Sigmoid colon (tissue), 7 donors: ENCODE measurements at regions of chr6 and their contacts with region 1.

Region 1: DNA sequence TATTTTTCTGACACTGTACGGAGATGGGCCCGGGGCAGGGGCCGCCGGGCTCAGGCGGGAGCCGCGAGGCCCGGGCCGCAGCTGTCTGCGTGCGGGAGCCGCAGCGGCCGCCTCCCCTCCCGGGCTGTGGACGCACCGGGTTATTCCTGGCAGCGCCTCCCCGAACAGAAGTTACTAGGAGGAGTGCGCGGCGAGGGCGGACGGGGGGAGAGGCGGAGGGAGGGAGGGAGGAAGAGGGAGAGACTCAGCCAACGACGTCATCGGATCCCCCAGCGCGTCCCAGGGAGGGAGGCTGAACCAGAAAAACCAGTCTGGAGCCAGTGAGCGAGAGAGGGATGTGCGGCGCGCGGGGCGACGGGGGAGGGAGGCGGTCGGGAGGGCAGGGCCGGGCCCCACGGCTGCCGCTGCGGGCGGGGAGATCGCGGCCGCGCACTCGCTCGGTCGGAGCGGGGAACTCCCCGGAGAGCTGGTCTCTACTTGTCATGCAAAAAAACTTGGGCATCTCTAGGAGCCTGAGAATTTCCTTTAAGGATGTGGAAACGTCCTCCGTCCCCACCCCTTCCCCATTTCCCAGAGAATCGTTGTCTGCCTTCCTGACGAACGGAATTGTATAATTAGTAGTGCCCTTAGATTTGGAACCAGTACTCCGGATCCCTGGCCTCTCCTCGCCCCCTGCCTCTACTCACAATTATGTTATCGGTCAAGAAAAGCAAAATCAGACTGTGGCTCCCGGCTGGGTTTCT is 1.4 kb upstream of the HIVEP2 start:
- DNase-seq: peak; percentile 100
- H3K4me3 ChIP-seq: peak overlapping the region; percentile 55 to 92 (median 78)
- H3K27ac ChIP-seq: peak overlapping the region; percentile 95 to 99 (median 99)
- H3K4me1 ChIP-seq: peaks cover 0 to 19% (median 17%) of the 10 kb centered on the region in 4 donors
- H3K27me3 ChIP-seq: no peaks in the 10 kb centered on the region
- CTCF ChIP-seq: no peak
- EP300 ChIP-seq: peak in 2 of 4 donors; percentile 35 to 50
- POLR2A ChIP-seq: peak; percentile 38 to 53

Region 2: GRCh38 chr6:142146828-142147662 is 799.3 kb before region 1 on chr6 and contains the starts of genes NMBR and VTA1:
- intact Hi-C with region 1: loop called (anchors 10 kb)
- DNase-seq: peak; percentile 98
- H3K4me3 ChIP-seq: peak within 1 kb of the TSS; percentile 73 to 89 (median 85)
- H3K27ac ChIP-seq: peak within 1 kb of the TSS; percentile 70 to 80 (median 76)
- H3K4me1 ChIP-seq: peaks cover 0 to 27% (median 22%) of the 10 kb centered on the region in 4 donors
- H3K27me3 ChIP-seq: no peaks in the 10 kb centered on the region
- CTCF ChIP-seq: peak; percentile 83 to 86 (median 86)
- EP300 ChIP-seq: peak in 1 of 4 donors; percentile 66
- POLR2A ChIP-seq: no peak
- total RNA-seq, gene NMBR: not detected
- total RNA-seq, gene VTA1: 33.3 to 46.2 (median 36.6) TPM

Region 3: DNA sequence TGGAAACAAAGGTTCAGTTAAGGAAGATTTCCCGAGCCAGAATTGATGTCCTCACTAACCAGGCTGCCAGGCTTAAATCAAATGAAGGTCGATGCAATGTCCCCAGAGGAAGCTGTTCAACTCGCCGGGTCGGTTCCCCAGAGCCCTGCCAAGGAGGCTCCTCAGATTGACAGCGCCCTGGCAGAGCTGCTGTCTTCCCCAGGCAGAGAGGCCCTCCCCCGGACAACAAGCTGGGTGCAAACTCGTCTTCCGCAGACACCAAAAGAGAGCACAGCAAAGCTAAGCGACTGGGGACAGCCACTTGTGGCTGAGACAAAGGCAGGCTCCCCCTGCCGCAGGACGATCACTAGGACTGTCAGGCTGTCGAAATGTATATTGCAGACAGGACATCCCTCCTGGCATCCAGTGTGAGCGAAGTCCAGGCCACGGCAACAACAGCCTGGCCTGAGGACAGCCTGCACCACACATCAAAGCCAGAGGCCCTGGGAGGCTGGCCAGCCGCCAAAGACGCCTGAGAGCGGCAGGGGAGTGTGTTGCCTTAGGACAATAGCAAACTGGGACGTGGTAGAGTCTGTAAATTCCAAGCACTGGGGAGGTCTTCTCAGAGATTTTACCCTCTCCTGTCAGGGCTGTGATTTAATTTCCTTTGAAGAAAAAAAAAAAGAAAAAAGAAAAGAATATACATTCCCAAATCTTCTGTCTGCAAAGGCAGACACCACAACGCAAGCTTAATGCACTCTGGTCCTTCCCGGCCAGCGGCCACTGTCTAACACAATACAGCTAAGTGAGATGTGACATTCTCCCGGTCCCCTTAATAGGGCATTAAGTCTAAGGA is 100.5 kb before region 1 on chr6:
- intact Hi-C with region 1: loop called (anchors 2 kb)
- DNase-seq: peak; percentile 91
- H3K4me3 ChIP-seq: peak overlapping the region in 3 of 4 donors; percentile 33 to 43 (median 34)
- H3K27ac ChIP-seq: peak overlapping the region; percentile 70 to 81 (median 78)
- H3K4me1 ChIP-seq: peaks cover 0 to 70% (median 41%) of the 10 kb centered on the region in 4 donors
- H3K27me3 ChIP-seq: no peaks in the 10 kb centered on the region
- CTCF ChIP-seq: no peak
- EP300 ChIP-seq: no peak
- POLR2A ChIP-seq: no peak

Region 4: DNA sequence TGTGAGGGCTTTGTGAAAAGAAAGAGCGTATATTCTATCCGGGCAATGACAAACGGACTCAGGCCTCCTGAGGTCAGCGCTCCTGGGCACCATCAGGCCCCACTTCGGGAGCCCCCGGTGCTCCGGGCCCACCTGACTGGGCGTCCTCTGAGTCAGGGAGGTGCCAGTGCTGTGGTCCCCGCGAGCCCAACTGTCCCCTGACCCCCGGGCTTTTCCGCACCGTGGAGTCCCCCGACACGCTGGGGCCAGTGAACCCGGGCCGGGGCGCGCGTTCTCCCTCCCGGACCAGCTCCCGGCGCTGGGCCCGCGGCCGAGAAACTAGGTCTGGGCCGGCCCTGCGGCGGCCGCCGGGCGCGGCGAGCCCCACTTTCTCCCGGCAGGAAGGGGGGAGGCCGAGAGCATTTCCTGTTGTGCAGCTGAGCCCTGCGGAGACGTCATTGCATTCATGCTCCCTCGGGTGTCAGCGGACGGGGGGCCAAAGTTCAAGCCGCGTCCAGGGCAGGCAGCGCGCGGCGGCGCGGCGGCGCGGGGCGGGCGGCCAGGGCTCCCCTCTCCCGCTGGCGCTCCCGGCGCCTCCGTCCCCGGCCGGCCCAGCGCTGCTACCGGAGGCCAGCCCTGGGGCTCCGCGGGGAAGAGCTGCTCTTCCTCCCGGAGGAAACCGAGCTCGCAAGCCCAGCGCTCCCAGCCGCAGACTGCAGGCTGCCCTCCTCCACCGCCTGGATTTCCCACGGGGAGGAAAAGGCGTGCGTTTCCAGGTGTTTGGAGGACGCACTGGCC is 19.7 kb before region 1 on chr6:
- intact Hi-C with region 1: loop called (anchors 2 kb)
- DNase-seq: peak; percentile 93
- H3K4me3 ChIP-seq: peak overlapping the region; percentile 42 to 63 (median 58)
- H3K27ac ChIP-seq: peak overlapping the region; percentile 76 to 91 (median 87)
- H3K4me1 ChIP-seq: peaks cover 0 to 16% (median 9%) of the 10 kb centered on the region in 4 donors
- H3K27me3 ChIP-seq: no peaks in the 10 kb centered on the region
- CTCF ChIP-seq: no peak
- EP300 ChIP-seq: no peak
- POLR2A ChIP-seq: no peak

Region 5: GRCh38 chr6:143450453-143451371 is 504.4 kb after region 1 on chr6 and contains the starts of genes ADAT2 and PEX3:
- intact Hi-C with region 1: loop called (anchors 5 kb)
- DNase-seq: peak; percentile 95
- H3K4me3 ChIP-seq: peak within 1 kb of the TSS; percentile 52 to 88 (median 76)
- H3K27ac ChIP-seq: peak within 1 kb of the TSS; percentile 69 to 79 (median 76)
- H3K4me1 ChIP-seq: peaks cover 0 to 29% (median 20%) of the 10 kb centered on the region in 4 donors
- H3K27me3 ChIP-seq: no peaks in the 10 kb centered on the region
- CTCF ChIP-seq: no peak
- EP300 ChIP-seq: no peak
- POLR2A ChIP-seq: peak; percentile 28 to 49
- total RNA-seq, gene ADAT2: 2.2 to 8.7 (median 2.9) TPM
- total RNA-seq, gene PEX3: 10.6 to 16.1 (median 12.3) TPM